Posterior vena cava (tissue), 2 donors: ENCODE measurements at regions of chr1 and their contacts with region 1.

Region 1: DNA sequence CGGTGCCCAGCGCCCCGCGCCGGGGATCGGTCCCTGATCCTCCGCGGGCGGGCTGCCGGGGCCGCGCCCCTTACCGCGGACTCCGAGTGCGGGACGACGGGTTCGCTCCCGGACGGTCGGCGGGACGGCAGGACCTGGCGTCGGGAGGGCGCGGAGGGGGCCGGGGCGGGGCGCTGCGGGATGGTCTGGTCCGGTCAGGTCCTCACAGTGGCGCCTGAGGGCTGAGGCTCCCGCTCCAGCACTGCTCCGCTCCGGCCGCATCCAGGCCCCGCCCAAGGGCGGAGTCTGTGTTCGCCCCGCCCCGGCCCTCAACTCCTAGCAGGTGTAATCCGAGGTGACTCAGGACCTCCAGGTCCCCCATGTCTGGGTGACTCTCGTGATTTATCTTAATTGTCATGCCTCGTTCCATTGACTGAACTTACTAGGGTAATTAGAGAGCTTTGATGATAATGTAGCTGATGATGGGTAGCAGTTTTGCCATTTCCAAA is at the start of gene RAB3B:
- DNase-seq: no peak
- total RNA-seq, gene RAB3B: 0.05 TPM in 1 of 2 donors, not detected in the other

Region 2: DNA sequence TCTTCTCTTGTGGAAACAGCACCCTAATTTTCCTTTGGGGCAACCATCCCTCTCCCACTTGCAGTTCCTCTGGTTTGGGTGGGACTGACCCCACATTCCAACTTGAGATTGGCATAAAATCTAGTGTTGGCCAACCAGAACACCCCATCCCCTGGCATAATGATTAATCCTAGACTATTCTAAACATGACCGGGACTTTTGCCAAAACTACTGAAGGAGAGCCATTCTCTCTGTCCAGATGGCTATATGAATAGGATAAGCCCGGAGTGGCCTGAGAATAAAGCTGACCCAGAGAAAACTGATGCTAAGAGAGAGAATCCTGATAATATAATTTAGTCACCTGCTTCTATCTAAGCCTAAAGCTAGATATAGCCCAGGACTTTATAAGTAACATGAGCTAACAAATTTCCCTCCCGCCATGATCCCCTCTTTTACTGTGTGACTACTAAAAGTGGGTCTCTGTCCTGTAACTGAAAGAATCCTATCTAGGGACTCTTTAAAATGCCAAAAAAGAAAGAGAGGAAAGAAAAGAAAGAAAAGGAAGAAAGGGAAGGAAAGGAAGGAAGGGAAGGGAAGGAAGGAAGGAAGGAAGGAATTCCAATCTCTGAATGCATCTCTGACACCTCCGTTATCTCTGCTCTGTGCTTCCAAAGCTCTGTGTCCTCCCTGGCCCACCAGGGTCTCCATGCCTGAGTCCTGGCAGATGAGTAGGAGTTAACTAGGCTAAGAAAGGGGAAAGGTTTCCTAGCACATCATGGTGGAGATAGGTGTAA is 84.0 kb before region 1 on chr1:
- intact Hi-C with region 1: loop called in 1 of 2 experiments (anchors 10 kb)
- DNase-seq: no peak

Region 3: GRCh38 chr1:51946300-51946699 is 44.2 kb before region 1 on chr1:
- intact Hi-C with region 1: no loop called
- DNase-seq: no peak

Region 4: GRCh38 chr1:52033190-52034049 is 42.9 kb after region 1 on chr1 and contains the start of gene KTI12:
- intact Hi-C with region 1: no loop called
- DNase-seq: peak; percentile 97
- total RNA-seq, gene KTI12: 5.7 to 7.8 TPM